IMR-90 (cell line): ENCODE measurements at regions of chr10 and their contacts with region 1.

Region 1: GRCh38 chr10:19819419-19820033 is 3.3 kb downstream of the PLXDC2 start:
- DNase-seq: peak; percentile 43
- ATAC-seq: no peak
- H3K4me3 ChIP-seq: no peak overlapping the region
- H3K27ac ChIP-seq: no peak overlapping the region
- H3K4me1 ChIP-seq: no peaks in the 10 kb centered on the region
- H3K27me3 ChIP-seq: peaks cover 2% of the 10 kb centered on the region; the same call in 1 of the 2 replicates
- CTCF ChIP-seq: peak; percentile 74
- POLR2A ChIP-seq: no peak
- RAD21 ChIP-seq: peak; percentile 66

Region 2: DNA sequence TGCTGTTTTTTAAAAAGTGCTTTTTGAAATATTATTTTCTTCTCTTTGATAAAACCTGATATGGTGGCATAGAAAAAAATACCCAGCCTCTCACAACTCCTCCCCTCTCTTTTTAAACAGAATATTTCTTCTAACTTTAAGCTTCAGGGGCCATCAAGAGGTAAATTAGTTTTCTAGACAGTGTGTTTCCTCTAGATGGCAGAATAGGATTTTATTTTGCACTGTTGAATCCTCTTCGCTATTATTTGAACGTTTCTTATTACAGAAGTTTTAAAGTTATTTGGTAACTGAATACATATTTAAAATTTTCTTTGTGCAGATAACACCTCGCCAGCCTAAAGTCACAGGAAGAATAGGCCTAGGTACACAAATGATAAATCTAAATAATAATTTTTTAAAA is 1130.0 kb before region 1 on chr10:
- CTCF ChIA-PET with region 1: no interaction called
- POLR2A ChIA-PET with region 1: no interaction called
- dilution Hi-C with region 1: no loop called
- in situ Hi-C with region 1: no loop called
- intact Hi-C with region 1: loop called (anchors 2 kb)
- DNase-seq: peak; percentile 65
- ATAC-seq: peak; percentile 87
- H3K4me3 ChIP-seq: no peak overlapping the region
- H3K27ac ChIP-seq: no peak overlapping the region
- H3K4me1 ChIP-seq: no peaks in the 10 kb centered on the region; the same call in 1 of the 2 replicates
- H3K27me3 ChIP-seq: no peaks in the 10 kb centered on the region
- CTCF ChIP-seq: peak; percentile 70
- POLR2A ChIP-seq: no peak
- RAD21 ChIP-seq: peak; percentile 76

Region 3: GRCh38 chr10:19629567-19629966 is 190.0 kb before region 1 on chr10:
- CTCF ChIA-PET with region 1: no interaction called
- POLR2A ChIA-PET with region 1: no interaction called
- dilution Hi-C with region 1: no loop called
- in situ Hi-C with region 1: no loop called
- intact Hi-C with region 1: loop called (anchors 2 kb)
- DNase-seq: peak; percentile 67
- ATAC-seq: peak; percentile 97
- H3K4me3 ChIP-seq: no peak overlapping the region
- H3K27ac ChIP-seq: no peak overlapping the region
- H3K4me1 ChIP-seq: peaks cover 5% of the 10 kb centered on the region
- H3K27me3 ChIP-seq: no peaks in the 10 kb centered on the region
- CTCF ChIP-seq: peak; percentile 39
- POLR2A ChIP-seq: no peak
- RAD21 ChIP-seq: no peak

Region 4: DNA sequence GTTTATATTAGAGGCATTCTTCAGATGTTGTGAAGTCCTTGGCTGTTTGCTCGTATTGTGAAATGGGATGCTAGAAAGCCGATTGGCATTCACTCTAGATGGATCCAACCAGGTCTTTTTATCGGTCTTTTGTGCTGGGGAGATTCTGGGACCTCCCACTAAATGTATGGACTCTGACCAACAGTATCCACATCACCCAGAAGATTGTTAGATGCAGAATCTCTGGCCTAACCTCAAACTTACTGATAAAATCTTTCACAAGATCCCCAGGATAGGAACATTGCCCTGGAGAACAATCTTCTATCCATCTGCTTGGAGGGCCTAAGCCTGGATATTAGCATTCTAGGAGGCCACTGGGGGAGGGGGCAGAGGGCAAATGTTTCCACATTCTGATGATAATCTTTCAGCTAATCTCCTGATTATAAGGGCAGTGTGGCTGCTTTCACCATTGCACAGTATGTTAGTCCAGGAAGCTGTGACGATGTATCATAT is 157.6 kb after region 1 on chr10:
- CTCF ChIA-PET with region 1: no interaction called
- POLR2A ChIA-PET with region 1: no interaction called
- dilution Hi-C with region 1: no loop called
- in situ Hi-C with region 1: no loop called
- intact Hi-C with region 1: loop called (anchors 5 kb)
- DNase-seq: peak; percentile 46
- ATAC-seq: peak; percentile 67
- H3K4me3 ChIP-seq: no peak overlapping the region
- H3K27ac ChIP-seq: no peak overlapping the region
- H3K4me1 ChIP-seq: peaks cover 7% of the 10 kb centered on the region
- H3K27me3 ChIP-seq: no peaks in the 10 kb centered on the region
- CTCF ChIP-seq: no peak
- POLR2A ChIP-seq: no peak
- RAD21 ChIP-seq: no peak

Region 5: DNA sequence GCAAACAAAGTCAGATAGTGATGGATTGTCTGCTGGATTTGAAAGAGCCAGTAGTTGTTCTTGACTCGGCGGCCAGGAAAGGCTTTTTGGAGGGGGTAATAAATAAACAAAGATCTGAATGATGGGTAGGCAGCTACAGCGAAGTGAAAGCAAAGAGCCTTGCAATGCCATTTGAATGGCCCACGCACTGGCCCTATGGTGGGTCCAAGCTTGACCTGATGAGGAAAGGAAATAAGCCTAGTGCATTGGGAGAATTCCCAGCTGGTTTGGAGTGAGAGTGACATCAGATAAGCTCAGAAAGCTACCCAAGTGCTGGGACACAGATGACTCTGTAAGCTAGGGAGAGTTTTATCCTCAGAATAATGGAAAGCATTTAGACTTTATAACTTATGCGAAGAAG is 361.9 kb after region 1 on chr10:
- CTCF ChIA-PET with region 1: no interaction called
- POLR2A ChIA-PET with region 1: no interaction called
- dilution Hi-C with region 1: no loop called
- in situ Hi-C with region 1: no loop called
- intact Hi-C with region 1: loop called (anchors 5 kb)
- DNase-seq: peak; percentile 3
- ATAC-seq: peak; percentile 40
- H3K4me3 ChIP-seq: peak overlapping the region; percentile 19; the same call in 1 of the 2 replicates
- H3K27ac ChIP-seq: no peak overlapping the region
- H3K4me1 ChIP-seq: no peaks in the 10 kb centered on the region
- H3K27me3 ChIP-seq: no peaks in the 10 kb centered on the region
- CTCF ChIP-seq: no peak
- POLR2A ChIP-seq: no peak
- RAD21 ChIP-seq: no peak

Region 6: GRCh38 chr10:20858292-20859124 is 1039.0 kb after region 1 on chr10:
- CTCF ChIA-PET with region 1: no interaction called
- POLR2A ChIA-PET with region 1: no interaction called
- dilution Hi-C with region 1: no loop called
- in situ Hi-C with region 1: no loop called
- intact Hi-C with region 1: loop called (anchors 2 kb)
- DNase-seq: peak; percentile 22
- ATAC-seq: peak; percentile 64
- H3K4me3 ChIP-seq: no peak overlapping the region
- H3K27ac ChIP-seq: no peak overlapping the region
- H3K4me1 ChIP-seq: no peaks in the 10 kb centered on the region
- H3K27me3 ChIP-seq: no peaks in the 10 kb centered on the region
- CTCF ChIP-seq: peak; percentile 56
- POLR2A ChIP-seq: no peak
- RAD21 ChIP-seq: peak; percentile 61